ENCODE measurements at regions of chr7 and their contacts with region 1.

Region 1: GRCh38 chr7:54743580-54743979 is 15.4 kb downstream of the SEC61G start:
- DNase-seq: no peak
- H3K4me3 ChIP-seq: no peak overlapping the region
- H3K27ac ChIP-seq: no peak overlapping the region
- H3K4me1 ChIP-seq: no peaks in the 10 kb centered on the region
- H3K27me3 ChIP-seq: no peaks in the 10 kb centered on the region
- CTCF ChIP-seq: no peak
- EP300 ChIP-seq: no peak
- POLR2A ChIP-seq: no peak

Region 2: DNA sequence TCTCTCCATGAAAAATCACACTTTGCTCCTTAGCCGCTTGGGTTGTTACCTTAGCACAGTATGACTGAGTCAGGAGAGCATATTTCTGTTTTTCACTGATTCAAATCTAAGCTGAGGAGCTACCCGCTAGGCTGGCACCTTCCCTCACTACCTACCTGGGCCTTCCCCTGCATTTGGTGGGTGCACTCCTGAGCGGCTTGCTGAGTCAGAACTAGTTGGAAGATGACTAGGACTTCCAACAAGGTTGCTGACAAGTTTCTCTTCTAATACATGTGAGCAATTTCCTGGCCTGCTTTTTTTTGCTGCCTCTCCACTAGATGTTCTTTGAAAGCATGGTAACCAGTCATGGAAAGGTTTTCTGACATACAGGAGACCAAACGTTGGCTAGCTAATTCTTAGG is 59.3 kb after region 1 on chr7:
- in situ Hi-C with region 1: no loop called
- intact Hi-C with region 1: loop called (anchors 2 kb)
- DNase-seq: no peak
- H3K4me3 ChIP-seq: no peak overlapping the region
- H3K27ac ChIP-seq: no peak overlapping the region
- H3K4me1 ChIP-seq: no peaks in the 10 kb centered on the region
- H3K27me3 ChIP-seq: no peaks in the 10 kb centered on the region
- CTCF ChIP-seq: no peak
- EP300 ChIP-seq: no peak
- POLR2A ChIP-seq: no peak

Measured in transverse colon (tissue), 4 donors.